CD8-positive, alpha-beta T cell (primary cell): ENCODE measurements at regions of chr11 and their contacts with region 1.

Region 1: DNA sequence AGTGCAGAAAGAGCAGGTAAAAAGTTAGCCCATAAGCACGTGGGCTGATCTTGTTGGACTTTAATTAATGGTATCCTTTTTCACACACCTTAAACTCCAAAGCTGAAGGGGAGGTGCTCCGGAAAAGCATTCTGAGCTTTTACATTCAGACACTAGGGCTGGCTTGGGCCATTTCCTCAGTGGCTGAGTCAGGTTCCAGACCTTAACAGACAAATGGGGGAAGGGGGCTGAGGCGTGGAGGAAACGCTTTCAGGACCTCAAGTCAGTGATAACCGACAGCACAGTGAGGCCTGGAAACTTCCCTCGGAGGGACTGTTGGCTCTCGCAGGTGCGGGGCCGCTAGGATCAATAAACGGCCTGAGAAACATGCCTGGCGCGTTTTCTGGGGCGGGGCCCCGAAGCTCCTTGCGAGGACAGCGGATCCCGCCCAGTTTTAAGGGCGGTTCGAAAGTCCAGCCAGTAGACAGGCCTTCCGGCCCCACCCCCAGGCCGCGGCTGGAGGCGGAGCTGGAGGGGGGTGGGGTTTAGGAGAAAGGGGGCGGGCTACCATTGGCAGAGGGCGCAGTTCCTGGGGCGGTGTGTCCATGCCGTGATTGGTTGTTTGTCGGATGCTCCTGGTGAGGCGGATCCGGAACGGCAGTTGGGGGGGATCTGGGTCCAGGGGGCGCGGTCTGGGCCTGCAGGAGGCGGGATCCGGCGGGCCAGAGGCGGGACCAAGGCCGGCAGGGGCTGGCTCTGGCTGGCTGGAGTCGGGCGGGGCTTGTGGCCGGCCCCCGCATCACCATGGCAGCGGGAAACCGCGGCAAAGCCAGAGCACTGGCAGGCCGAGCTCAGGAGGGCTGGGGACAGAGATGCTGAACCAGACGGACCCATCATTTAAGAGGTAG is 8.0 kb downstream of the C11orf52 start:
- DNase-seq: peak; percentile 90 to 97 (median 96)
- ATAC-seq: peak; percentile 92
- H3K4me3 ChIP-seq: peak overlapping the region; percentile 66 to 79
- H3K4me3 Mint-ChIP-seq: peak overlapping the region; percentile 81
- H3K27ac ChIP-seq: peak overlapping the region; percentile 68 to 81
- H3K27ac Mint-ChIP-seq: peak overlapping the region; percentile 91
- H3K4me1 ChIP-seq: peaks cover 14% of the 10 kb centered on the region
- H3K4me1 Mint-ChIP-seq: peaks cover 17% of the 10 kb centered on the region
- H3K27me3 ChIP-seq: no peaks in the 10 kb centered on the region
- H3K27me3 Mint-ChIP-seq: no peaks in the 10 kb centered on the region
- CTCF ChIP-seq: no peak

Region 2: DNA sequence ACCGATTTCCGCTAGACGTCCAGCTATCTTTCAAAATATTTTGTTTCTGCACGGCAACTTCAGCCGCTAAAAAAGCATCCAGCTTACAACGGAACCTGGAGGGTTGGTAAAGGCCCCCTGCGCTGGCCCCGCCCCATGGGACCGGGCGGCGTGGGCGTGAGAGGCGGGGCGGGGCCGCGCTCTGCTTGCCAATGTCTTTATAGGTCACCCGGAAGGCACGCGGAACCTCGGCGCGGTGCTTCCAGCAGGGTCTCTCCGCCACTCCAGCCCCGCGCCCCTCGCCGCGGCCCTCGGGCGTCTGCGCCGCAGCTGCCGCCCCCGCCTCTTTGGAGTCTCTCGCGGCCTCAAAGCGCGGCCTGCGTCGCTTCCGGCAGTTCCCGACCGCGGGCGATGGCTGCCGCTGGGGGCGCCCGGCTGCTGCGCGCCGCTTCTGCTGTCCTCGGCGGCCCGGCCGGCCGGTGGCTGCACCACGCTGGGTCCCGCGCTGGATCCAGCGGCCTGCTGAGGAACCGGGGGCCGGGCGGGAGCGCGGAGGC is 1496.9 kb before region 1 on chr11 and contains the start of gene FDX1:
- CTCF ChIA-PET with region 1: no interaction called
- POLR2A ChIA-PET with region 1: no interaction called
- intact Hi-C with region 1: loop called in 1 of 2 experiments (anchors 5 kb)
- DNase-seq: peak; percentile 53 to 90 (median 79)
- ATAC-seq: peak; percentile 84
- H3K4me3 ChIP-seq: peak within 1 kb of the TSS; percentile 82 to 91
- H3K4me3 Mint-ChIP-seq: peak within 1 kb of the TSS; percentile 97
- H3K27ac ChIP-seq: peak within 1 kb of the TSS; percentile 72 to 84
- H3K27ac Mint-ChIP-seq: peak within 1 kb of the TSS; percentile 97
- H3K4me1 ChIP-seq: peaks cover 37% of the 10 kb centered on the region
- H3K4me1 Mint-ChIP-seq: peaks cover 44% of the 10 kb centered on the region
- H3K27me3 ChIP-seq: no peaks in the 10 kb centered on the region
- H3K27me3 Mint-ChIP-seq: no peaks in the 10 kb centered on the region
- CTCF ChIP-seq: peak; percentile 58
- total RNA-seq, gene FDX1: 11.7 to 12.5 TPM

Region 3: DNA sequence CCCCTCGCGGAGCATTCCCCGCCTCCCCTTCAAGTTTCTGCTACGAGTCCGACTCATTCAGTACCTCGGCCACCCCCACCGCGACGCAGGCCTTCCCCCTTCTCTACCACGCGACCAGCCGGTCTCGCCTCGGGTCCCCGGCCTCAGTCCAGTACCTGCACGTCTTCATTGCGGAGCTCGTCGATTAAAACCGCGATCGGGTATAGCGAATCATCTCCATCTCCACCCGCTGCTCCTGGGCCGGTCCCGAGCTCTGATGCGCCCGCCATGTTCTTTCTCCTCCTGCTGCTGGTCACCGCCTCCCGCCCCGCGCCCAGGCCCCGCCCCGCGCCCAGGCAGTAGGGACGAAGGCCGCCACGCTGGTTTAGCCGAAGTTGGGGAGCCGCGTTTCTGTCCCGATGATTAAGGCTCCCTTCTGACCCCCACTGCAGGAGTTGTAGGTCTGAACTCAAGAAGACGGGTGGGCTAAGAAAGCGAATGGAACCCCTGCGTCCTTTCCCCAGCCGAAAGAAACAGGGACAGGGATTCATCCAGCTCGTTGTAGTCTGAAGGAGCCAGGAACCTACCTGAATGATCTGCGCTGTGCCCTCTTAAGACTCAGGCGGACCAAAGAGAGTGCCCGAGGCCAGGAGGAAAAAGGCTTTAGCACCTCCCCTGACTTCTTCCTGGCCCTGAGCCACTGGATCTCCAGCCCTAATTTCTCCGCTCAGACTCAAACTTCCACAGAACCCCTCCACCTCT is 160.5 kb before region 1 on chr11 and contains the start of gene PPP2R1B:
- CTCF ChIA-PET with region 1: no interaction called
- POLR2A ChIA-PET with region 1: no interaction called
- intact Hi-C with region 1: loop called in 1 of 2 experiments (anchors 5 kb)
- DNase-seq: peak; percentile 33 to 83 (median 73)
- ATAC-seq: peak; percentile 98
- H3K4me3 ChIP-seq: peak within 1 kb of the TSS; percentile 86 to 97
- H3K4me3 Mint-ChIP-seq: peak within 1 kb of the TSS; percentile 99
- H3K27ac ChIP-seq: peak within 1 kb of the TSS; percentile 63 to 67
- H3K27ac Mint-ChIP-seq: peak within 1 kb of the TSS; percentile 97
- H3K4me1 ChIP-seq: peaks cover 12% of the 10 kb centered on the region
- H3K4me1 Mint-ChIP-seq: peaks cover 39% of the 10 kb centered on the region
- H3K27me3 ChIP-seq: no peaks in the 10 kb centered on the region
- H3K27me3 Mint-ChIP-seq: no peaks in the 10 kb centered on the region
- CTCF ChIP-seq: no peak
- total RNA-seq, gene PPP2R1B: 47.4 to 53.8 TPM

Region 4: GRCh38 chr11:111878849-111879636 is 47.7 kb before region 1 on chr11 and contains the starts of genes CFAP68 and FDXACB1:
- CTCF ChIA-PET with region 1: interaction called, 4 read pairs
- POLR2A ChIA-PET with region 1: interaction called, 11 read pairs
- intact Hi-C with region 1: loop called (anchors 1 kb)
- DNase-seq: peak; percentile 91 to 99 (median 95)
- ATAC-seq: peak; percentile 89
- H3K4me3 ChIP-seq: peak within 1 kb of the TSS; percentile 73 to 76
- H3K4me3 Mint-ChIP-seq: peak within 1 kb of the TSS; percentile 92
- H3K27ac ChIP-seq: peak within 1 kb of the TSS; percentile 98
- H3K27ac Mint-ChIP-seq: peak within 1 kb of the TSS; percentile 100
- H3K4me1 ChIP-seq: peaks cover 14% of the 10 kb centered on the region
- H3K4me1 Mint-ChIP-seq: peaks cover 24% of the 10 kb centered on the region
- H3K27me3 ChIP-seq: no peaks in the 10 kb centered on the region
- H3K27me3 Mint-ChIP-seq: no peaks in the 10 kb centered on the region
- CTCF ChIP-seq: peak; percentile 94
- total RNA-seq, gene CFAP68: 21.7 to 22.7 TPM
- total RNA-seq, gene FDXACB1: 4.3 to 5.4 TPM

Region 5: GRCh38 chr11:112074026-112074811 is 147.5 kb after region 1 on chr11 and contains the start of gene NKAPD1:
- CTCF ChIA-PET with region 1: interaction called, 3 read pairs
- POLR2A ChIA-PET with region 1: no interaction called
- intact Hi-C with region 1: loop called (anchors 1 to 5 kb)
- DNase-seq: peak; percentile 64 to 92 (median 82)
- ATAC-seq: peak; percentile 79
- H3K4me3 ChIP-seq: peak within 1 kb of the TSS; percentile 79 to 87
- H3K4me3 Mint-ChIP-seq: peak within 1 kb of the TSS; percentile 96
- H3K27ac ChIP-seq: peak within 1 kb of the TSS; percentile 70 to 80
- H3K27ac Mint-ChIP-seq: peak within 1 kb of the TSS; percentile 95
- H3K4me1 ChIP-seq: peaks cover 12% of the 10 kb centered on the region
- H3K4me1 Mint-ChIP-seq: peaks cover 33% of the 10 kb centered on the region
- H3K27me3 ChIP-seq: no peaks in the 10 kb centered on the region
- H3K27me3 Mint-ChIP-seq: peaks cover 7% of the 10 kb centered on the region
- CTCF ChIP-seq: no peak
- total RNA-seq, gene NKAPD1: 16.3 to 17.0 TPM

Region 6: GRCh38 chr11:112226062-112226830 is 299.5 kb after region 1 on chr11 and contains the start of gene PTS:
- CTCF ChIA-PET with region 1: no interaction called
- POLR2A ChIA-PET with region 1: no interaction called
- intact Hi-C with region 1: loop called in 1 of 2 experiments (anchors 1 kb)
- DNase-seq: peak; percentile 66 to 94 (median 82)
- ATAC-seq: peak; percentile 89
- H3K4me3 ChIP-seq: peak within 1 kb of the TSS; percentile 71 to 81
- H3K4me3 Mint-ChIP-seq: peak within 1 kb of the TSS; percentile 95
- H3K27ac ChIP-seq: peak within 1 kb of the TSS; percentile 91 to 100
- H3K27ac Mint-ChIP-seq: peak within 1 kb of the TSS; percentile 99
- H3K4me1 ChIP-seq: peaks cover 10% of the 10 kb centered on the region
- H3K4me1 Mint-ChIP-seq: peaks cover 31% of the 10 kb centered on the region
- H3K27me3 ChIP-seq: no peaks in the 10 kb centered on the region
- H3K27me3 Mint-ChIP-seq: no peaks in the 10 kb centered on the region
- CTCF ChIP-seq: no peak
- total RNA-seq, gene PTS: 83.5 to 87.9 TPM

Region 7: DNA sequence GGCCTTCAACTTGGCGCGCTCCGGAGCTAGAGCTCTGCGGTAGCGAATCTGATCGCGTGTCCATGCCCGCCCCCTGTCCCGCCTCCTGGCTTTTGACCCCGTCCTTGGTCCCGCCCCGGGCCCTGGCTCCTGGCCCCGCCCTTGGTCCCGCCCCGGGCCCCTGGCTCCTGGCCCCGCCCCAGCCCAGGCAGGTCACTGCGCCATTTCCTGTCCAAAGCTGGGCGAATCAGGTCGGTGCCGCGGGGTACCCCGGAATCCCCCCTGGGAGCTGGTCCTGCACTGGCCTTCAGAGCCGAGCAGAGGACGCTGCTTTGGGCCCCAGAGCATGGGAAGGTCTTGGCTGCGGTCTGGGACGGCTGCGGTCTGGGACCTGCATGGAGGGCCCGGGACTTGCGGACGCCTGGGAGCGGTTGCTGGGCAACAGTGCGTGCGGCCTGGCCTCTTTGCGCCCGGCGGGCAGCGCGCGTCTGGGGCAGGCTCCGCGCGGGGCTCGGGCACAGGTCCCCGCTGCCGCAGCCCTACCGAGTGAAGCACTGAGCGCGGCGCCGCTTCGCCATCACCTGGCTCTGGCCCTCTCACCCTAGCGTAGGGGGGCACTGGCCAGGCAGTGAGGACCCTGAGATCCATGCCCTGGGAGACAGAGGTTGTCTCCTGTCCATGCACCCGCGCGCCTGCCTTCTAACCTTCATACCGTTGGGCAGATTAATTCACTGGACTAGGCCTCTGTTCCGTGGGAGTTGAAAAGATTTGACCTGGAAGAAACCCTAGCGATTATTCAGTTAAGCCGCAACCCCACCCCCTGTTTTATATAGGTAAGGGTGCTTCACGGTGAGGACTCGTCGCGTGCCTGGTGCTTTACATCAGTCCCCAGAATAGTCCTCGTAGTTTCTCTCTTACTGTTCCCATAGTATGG is 1387.9 kb after region 1 on chr11 and contains the start of gene TTC12:
- CTCF ChIA-PET with region 1: no interaction called
- POLR2A ChIA-PET with region 1: interaction called, 5 read pairs
- intact Hi-C with region 1: loop called in 1 of 2 experiments (anchors 10 kb)
- DNase-seq: peak; percentile 82 to 95 (median 90)
- ATAC-seq: peak; percentile 98
- H3K4me3 ChIP-seq: peak within 1 kb of the TSS; percentile 59 to 66
- H3K4me3 Mint-ChIP-seq: peak within 1 kb of the TSS; percentile 82
- H3K27ac ChIP-seq: peak within 1 kb of the TSS; percentile 81 to 87
- H3K27ac Mint-ChIP-seq: peak within 1 kb of the TSS; percentile 85
- H3K4me1 ChIP-seq: peaks cover 17% of the 10 kb centered on the region
- H3K4me1 Mint-ChIP-seq: peaks cover 30% of the 10 kb centered on the region
- H3K27me3 ChIP-seq: no peaks in the 10 kb centered on the region
- H3K27me3 Mint-ChIP-seq: no peaks in the 10 kb centered on the region
- CTCF ChIP-seq: no peak
- total RNA-seq, gene TTC12: 8.6 to 10.8 TPM